ENCODE measurements at regions of chr13 and their contacts with region 1.

Region 1: DNA sequence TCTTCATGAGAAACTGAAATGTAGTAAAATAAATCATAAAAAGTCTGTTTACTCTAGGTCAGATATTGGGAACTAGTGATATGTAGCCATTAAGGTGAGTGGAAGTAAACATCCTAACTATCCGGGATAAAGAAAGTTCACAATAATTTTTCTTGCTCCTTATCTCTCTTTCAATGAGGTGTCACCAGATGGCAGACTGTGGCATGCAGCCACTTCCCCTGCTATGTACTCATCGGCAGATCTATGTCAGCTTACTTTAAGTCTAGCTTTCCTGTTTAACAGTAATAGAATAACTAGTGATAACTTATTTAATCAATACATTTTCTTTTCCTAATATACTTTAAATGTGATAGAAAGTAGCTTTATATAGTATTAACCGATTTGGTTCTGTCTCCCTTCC is 181.9 kb downstream of the NDFIP2 start:
- DNase-seq: no peak

Region 2: GRCh38 chr13:79549355-79550106 is 113.4 kb before region 1 on chr13:
- intact Hi-C with region 1: loop called (anchors 10 kb)
- DNase-seq: no peak

Measured in cardiac septum (tissue), 1 donor.